ENCODE measurements at regions of chr17 and their contacts with region 1.

Region 1: DNA sequence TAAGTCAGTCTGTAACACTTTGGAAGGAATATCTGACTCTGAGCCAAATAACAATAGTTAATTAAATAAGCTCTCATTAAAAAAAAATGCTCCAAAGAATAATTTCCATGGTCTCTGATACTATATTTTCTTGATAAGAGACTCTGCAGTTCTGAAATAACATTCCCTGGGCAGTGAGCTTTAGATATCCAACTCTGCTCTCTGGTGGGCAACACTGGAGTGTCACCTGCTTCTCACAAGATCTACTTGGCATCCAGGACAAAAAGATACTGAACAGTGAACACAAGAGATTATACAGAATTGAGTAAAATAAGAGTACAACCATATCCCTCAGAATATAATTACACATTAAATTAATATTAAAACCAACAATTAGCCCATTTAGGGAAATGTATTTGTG is 13.7 kb downstream of the BLMH start:
- DNase-seq: peak in 1 of 5 donors; percentile 16
- ATAC-seq: peak in 3 of 4 donors; percentile 64 to 81 (median 71)
- H3K4me3 ChIP-seq: no peak overlapping the region
- H3K27ac ChIP-seq: no peak overlapping the region
- H3K4me1 ChIP-seq: peaks cover 0 to 7% (median 0%) of the 10 kb centered on the region in 12 donors
- H3K27me3 ChIP-seq: no peaks in the 10 kb centered on the region
- CTCF ChIP-seq: peak in 11 of 12 donors; percentile 19 to 65 (median 57)
- POLR2A ChIP-seq: no peak

Region 2: GRCh38 chr17:29891131-29891530 is 386.9 kb before region 1 on chr17:
- intact Hi-C with region 1: no loop called
- DNase-seq: no peak
- ATAC-seq: no peak
- H3K4me3 ChIP-seq: no peak overlapping the region
- H3K27ac ChIP-seq: no peak overlapping the region
- H3K4me1 ChIP-seq: peaks cover 0 to 13% (median 0%) of the 10 kb centered on the region in 12 donors
- H3K27me3 ChIP-seq: no peaks in the 10 kb centered on the region
- CTCF ChIP-seq: no peak
- POLR2A ChIP-seq: no peak

Region 3: DNA sequence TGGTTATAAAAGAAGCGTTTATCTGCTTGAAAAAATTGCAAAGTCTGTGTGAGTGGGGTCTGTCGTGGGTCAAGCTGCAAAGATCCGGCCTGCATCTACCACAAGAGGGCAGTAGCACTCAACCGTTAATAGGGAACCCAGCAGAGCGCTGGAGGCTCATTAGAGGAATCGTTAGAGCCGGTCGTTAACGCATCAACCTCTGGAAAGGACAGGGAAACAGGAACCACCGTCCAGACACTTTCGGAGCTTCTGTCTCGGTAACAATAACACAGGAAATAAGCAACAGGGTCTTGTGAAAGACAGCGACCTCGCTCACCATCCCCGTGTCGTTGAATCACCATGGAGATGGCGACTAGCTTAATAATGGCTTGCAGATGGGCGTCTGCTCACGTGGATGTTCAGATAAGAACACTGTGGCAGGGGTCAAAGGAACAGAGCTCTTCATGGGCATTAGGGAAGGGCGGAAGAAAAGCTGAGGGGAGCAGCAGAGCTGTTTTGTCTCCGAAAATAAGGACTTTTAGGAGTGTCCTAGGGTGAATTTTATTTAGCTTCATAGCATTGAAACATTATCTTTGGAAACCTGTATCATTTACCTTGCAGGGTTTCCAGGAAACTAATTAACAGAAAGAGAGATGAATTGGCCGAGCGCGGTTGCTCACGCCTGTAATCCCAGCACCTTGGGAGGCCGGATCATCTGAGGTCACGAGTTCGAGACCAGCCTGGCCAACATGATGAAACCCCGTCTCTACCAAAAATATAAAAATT is 173.3 kb before region 1 on chr17:
- intact Hi-C with region 1: loop called in 8 of 10 experiments (anchors 1 to 5 kb)
- DNase-seq: peak; percentile 67 to 83 (median 75)
- ATAC-seq: peak; percentile 84 to 98 (median 98)
- H3K4me3 ChIP-seq: peak overlapping the region in 10 of 12 donors; percentile 19 to 61 (median 45)
- H3K27ac ChIP-seq: peak overlapping the region in 7 of 12 donors; percentile 1 to 54 (median 29)
- H3K4me1 ChIP-seq: peaks cover 0 to 10% (median 0%) of the 10 kb centered on the region in 12 donors
- H3K27me3 ChIP-seq: no peaks in the 10 kb centered on the region
- CTCF ChIP-seq: peak; percentile 86 to 96 (median 90)
- POLR2A ChIP-seq: no peak

Region 4: DNA sequence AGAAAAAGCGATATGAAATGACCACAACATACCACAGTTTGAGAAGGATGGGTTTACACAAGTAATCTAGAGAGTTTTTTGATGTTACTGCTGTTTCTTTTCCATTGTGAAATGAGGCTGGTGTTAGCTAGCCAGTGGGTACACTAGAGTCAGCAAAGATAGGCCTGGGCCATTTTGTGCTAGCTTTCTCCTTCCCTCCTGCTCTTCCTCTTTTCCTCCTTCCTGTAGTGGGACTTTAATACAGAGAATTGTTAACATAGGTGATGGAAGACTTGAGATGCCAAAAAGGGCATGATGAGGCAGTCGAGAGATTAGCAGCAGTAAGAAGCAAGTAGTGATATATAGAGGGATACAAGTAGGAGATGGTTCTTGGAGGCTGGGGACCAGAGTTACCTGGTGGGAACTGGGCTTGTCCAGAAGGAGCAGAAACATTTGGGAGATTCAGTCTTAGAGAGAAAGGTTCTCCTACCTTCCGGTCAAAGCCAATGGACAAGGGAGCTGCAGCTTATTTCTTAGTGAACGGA is 153.7 kb before region 1 on chr17:
- intact Hi-C with region 1: loop called in 7 of 10 experiments (anchors 5 kb)
- DNase-seq: no peak
- ATAC-seq: no peak
- H3K4me3 ChIP-seq: no peak overlapping the region
- H3K27ac ChIP-seq: no peak overlapping the region
- H3K4me1 ChIP-seq: peaks cover 0 to 48% (median 9%) of the 10 kb centered on the region in 12 donors
- H3K27me3 ChIP-seq: no peaks in the 10 kb centered on the region
- CTCF ChIP-seq: no peak
- POLR2A ChIP-seq: no peak

Region 5: DNA sequence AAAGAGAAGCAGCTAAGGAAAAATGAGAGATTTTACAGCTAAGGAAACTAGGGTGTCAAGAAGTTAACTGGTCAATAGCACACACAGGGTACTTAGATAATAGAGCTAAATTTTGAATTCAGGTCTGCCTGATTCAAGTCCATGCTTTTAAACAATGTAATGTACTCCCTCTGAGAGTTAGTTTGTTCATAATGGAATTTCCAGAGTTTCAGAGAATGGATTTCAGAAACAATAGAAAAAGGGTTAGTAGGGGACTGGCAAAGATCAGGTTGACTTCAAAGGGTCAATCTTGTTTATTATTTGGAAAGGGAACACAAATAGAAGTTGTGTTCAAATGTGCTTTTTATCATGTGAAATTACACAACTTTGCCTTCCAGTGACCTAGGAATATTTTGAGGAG is 143.5 kb before region 1 on chr17:
- intact Hi-C with region 1: loop called in 7 of 10 experiments (anchors 5 kb)
- DNase-seq: no peak
- ATAC-seq: no peak
- H3K4me3 ChIP-seq: no peak overlapping the region
- H3K27ac ChIP-seq: no peak overlapping the region
- H3K4me1 ChIP-seq: peaks cover 0 to 29% (median 7%) of the 10 kb centered on the region in 12 donors
- H3K27me3 ChIP-seq: no peaks in the 10 kb centered on the region
- CTCF ChIP-seq: no peak
- POLR2A ChIP-seq: no peak

Region 6: GRCh38 chr17:30299000-30299399 is 21.0 kb after region 1 on chr17:
- intact Hi-C with region 1: no loop called
- DNase-seq: no peak
- ATAC-seq: no peak
- H3K4me3 ChIP-seq: no peak overlapping the region
- H3K27ac ChIP-seq: no peak overlapping the region
- H3K4me1 ChIP-seq: no peaks in the 10 kb centered on the region
- H3K27me3 ChIP-seq: no peaks in the 10 kb centered on the region
- CTCF ChIP-seq: no peak
- POLR2A ChIP-seq: no peak